ENCODE measurements at regions of chr1 and their contacts with region 1.

Region 1: DNA sequence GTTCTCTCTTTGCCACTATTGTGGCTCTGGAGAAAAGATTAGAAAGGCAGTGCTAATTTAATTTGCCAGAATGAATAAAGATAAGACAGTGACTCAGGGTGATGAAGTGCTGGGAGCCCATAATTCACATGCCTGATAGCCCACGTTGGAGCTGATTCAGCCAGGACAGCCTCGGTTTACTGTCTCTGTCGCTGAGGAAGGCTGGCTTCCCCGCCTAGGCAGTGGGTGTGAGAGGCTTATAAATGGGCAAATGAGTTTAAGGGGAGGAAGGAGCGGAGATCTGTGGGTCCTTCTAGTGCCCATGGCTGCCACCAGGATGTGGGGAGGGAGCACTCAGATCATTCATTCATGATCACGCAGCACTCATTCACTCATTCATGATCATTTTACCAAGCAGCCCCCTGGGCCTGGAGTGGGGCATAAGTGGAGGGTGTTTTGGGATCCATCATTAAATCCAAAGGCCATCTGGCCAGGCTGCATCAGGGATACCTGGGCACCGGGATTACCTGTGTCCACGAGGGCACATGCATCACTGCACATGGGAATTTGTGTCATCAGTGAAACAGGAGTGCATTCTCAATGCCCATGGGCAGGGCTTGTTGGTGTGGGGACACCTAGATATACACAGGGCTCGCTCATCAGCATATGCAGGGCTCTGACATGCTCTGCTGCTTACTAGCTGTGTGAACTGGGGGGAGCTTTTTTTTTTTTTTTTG is 315.4 kb downstream of the MATN1 start:
- DNase-seq: peak in 1 of 2 donors; percentile 76
- H3K4me3 ChIP-seq: no peak overlapping the region
- CTCF ChIP-seq: no peak
- POLR2A ChIP-seq: no peak

Region 2: DNA sequence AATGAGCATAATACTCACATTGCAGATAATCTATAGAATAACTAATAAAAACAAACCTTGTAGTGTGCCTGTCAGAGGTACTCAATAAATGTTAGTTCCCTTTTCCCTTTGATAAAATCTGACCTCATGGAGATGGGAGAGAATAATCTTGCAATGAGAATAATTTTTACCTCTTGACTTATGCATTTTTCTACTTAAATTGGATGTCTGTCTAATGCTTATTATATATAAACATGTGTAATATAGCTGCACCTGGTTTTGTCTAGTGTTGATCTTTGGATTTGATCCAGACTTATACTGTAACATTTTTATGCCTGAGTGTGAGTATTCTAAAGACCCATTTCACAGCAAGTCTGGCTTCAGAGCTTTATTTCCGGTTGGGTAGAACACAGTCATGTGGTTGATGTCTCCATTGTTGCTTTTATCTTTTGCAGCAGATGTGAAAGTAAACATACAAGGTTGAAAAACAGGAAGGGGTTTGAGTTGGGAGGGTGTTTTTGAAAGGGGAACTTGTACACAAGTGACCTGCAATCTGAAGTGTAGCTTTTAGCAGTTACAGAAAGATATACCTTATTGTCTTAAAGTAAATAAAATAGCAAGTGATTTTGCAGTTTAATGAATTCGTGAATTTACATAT is 1481.3 kb before region 1 on chr1:
- intact Hi-C with region 1: no loop called
- DNase-seq: no peak
- H3K4me3 ChIP-seq: no peak overlapping the region
- CTCF ChIP-seq: no peak
- POLR2A ChIP-seq: no peak

Region 3: GRCh38 chr1:29395736-29396437 is 1012.1 kb before region 1 on chr1:
- intact Hi-C with region 1: loop called (anchors 2 kb)
- DNase-seq: peak in 1 of 2 donors; percentile 78
- H3K4me3 ChIP-seq: no peak overlapping the region
- CTCF ChIP-seq: no peak
- POLR2A ChIP-seq: no peak

Region 4: GRCh38 chr1:30707412-30708360 is 299.7 kb after region 1 on chr1:
- intact Hi-C with region 1: loop called (anchors 10 kb)
- DNase-seq: peak; percentile 67 to 95
- H3K4me3 ChIP-seq: no peak overlapping the region
- CTCF ChIP-seq: peak in 1 of 3 donors; percentile 60
- POLR2A ChIP-seq: no peak

Measured in lower leg skin (tissue), 4 donors.